ENCODE measurements at regions of chrX and their contacts with region 1.

Region 1: GRCh38 chrX:57821703-57822375 is 88.4 kb downstream of the ZXDA start:
- DNase-seq: no peak
- ATAC-seq: peak; percentile 81
- H3K4me3 ChIP-seq: peak overlapping the region; percentile 26 to 34
- H3K27ac ChIP-seq: no peak overlapping the region
- H3K4me1 ChIP-seq: no peaks in the 10 kb centered on the region
- H3K27me3 ChIP-seq: no peaks in the 10 kb centered on the region

Region 2: GRCh38 chrX:57587607-57588006 is 234.2 kb before region 1 on chrX:
- intact Hi-C with region 1: loop called in 1 of 2 experiments (anchors 10 kb)
- DNase-seq: no peak
- ATAC-seq: no peak
- H3K4me3 ChIP-seq: no peak overlapping the region
- H3K27ac ChIP-seq: no peak overlapping the region
- H3K4me1 ChIP-seq: no peaks in the 10 kb centered on the region
- H3K27me3 ChIP-seq: no peaks in the 10 kb centered on the region

Region 3: GRCh38 chrX:57918750-57919436 is 97.1 kb after region 1 on chrX:
- intact Hi-C with region 1: loop called (anchors 2 to 10 kb)
- DNase-seq: peak in 1 of 2 donors; percentile 55
- ATAC-seq: peak; percentile 36
- H3K4me3 ChIP-seq: no peak overlapping the region
- H3K27ac ChIP-seq: no peak overlapping the region
- H3K4me1 ChIP-seq: no peaks in the 10 kb centered on the region
- H3K27me3 ChIP-seq: no peaks in the 10 kb centered on the region

Region 4: GRCh38 chrX:57929373-57929772 is 107.5 kb after region 1 on chrX:
- intact Hi-C with region 1: loop called in 1 of 2 experiments (anchors 10 kb)
- DNase-seq: no peak
- ATAC-seq: no peak
- H3K4me3 ChIP-seq: no peak overlapping the region
- H3K27ac ChIP-seq: no peak overlapping the region
- H3K4me1 ChIP-seq: no peaks in the 10 kb centered on the region
- H3K27me3 ChIP-seq: no peaks in the 10 kb centered on the region

Region 5: DNA sequence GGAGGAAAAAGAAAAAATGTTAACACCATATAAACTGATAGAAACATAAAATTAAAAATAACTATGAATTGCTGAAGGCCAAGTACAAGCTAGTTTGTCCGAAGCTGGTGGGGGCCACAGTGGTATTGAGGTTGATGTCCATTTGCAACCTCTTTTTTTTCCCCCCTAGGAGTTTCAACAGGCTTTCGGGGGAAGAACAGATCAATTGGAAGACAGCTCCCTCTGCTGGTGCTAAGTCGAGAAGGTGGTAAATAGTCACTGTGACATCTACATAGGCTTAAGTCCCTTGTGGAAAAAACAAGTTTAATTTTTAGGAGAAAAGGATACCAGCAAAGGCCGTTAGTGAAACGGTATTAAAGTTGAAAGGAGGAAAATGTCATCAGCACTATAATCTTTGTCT is 204.1 kb after region 1 on chrX:
- intact Hi-C with region 1: loop called in 1 of 2 experiments (anchors 1 kb)
- DNase-seq: no peak
- ATAC-seq: no peak
- H3K4me3 ChIP-seq: no peak overlapping the region
- H3K27ac ChIP-seq: no peak overlapping the region
- H3K4me1 ChIP-seq: no peaks in the 10 kb centered on the region
- H3K27me3 ChIP-seq: no peaks in the 10 kb centered on the region

Measured in aorta (tissue), 5 donors.